OCI-LY7 (cell line): ENCODE measurements at regions of chr14 and their contacts with region 1.

Region 1: GRCh38 chr14:81220830-81221578 is at the start of gene GTF2A1:
- DNase-seq: peak; percentile 97
- H3K4me3 ChIP-seq: peak within 1 kb of the TSS; percentile 92
- H3K27ac ChIP-seq: peak within 1 kb of the TSS; percentile 93
- H3K4me1 ChIP-seq: peaks cover 34% of the 10 kb centered on the region
- CTCF ChIP-seq: no peak
- total RNA-seq, gene GTF2A1: 32.5 and 35.1 TPM in 2 replicates

Region 2: GRCh38 chr14:80805136-80805535 is 415.9 kb before region 1 on chr14:
- CTCF ChIA-PET with region 1: no interaction called
- POLR2A ChIA-PET with region 1: no interaction called
- intact Hi-C with region 1: no loop called
- DNase-seq: no peak
- H3K4me3 ChIP-seq: no peak overlapping the region
- H3K27ac ChIP-seq: no peak overlapping the region
- H3K4me1 ChIP-seq: no peaks in the 10 kb centered on the region
- CTCF ChIP-seq: no peak

Region 3: DNA sequence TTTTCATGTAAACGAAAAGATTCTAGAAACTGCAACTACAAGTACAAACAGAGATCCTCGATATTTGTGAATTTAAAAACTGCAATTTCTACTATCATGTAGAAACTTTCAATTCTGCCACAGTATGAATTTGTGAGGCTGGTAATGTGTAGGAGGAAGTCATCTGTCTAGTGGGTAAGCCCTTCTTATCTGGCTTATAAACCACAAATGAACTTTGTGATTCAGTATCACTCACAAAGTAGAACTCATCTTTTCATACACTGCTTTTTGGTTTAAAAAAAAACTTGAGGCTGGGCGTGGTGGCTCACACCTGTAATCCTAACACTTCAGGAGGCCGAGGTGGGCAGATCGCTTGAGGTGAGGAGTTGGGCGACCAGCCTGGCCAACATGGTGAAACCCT is 20.9 kb before region 1 on chr14:
- CTCF ChIA-PET with region 1: no interaction called
- POLR2A ChIA-PET with region 1: interaction called, 13 read pairs
- intact Hi-C with region 1: no loop called
- DNase-seq: no peak
- H3K4me3 ChIP-seq: no peak overlapping the region
- H3K27ac ChIP-seq: no peak overlapping the region
- H3K4me1 ChIP-seq: no peaks in the 10 kb centered on the region
- CTCF ChIP-seq: no peak

Region 4: GRCh38 chr14:81315341-81315740 is 94.3 kb after region 1 on chr14:
- CTCF ChIA-PET with region 1: no interaction called
- POLR2A ChIA-PET with region 1: no interaction called
- intact Hi-C with region 1: no loop called
- DNase-seq: no peak
- H3K4me3 ChIP-seq: no peak overlapping the region
- H3K27ac ChIP-seq: no peak overlapping the region
- H3K4me1 ChIP-seq: no peaks in the 10 kb centered on the region
- CTCF ChIP-seq: no peak